ENCODE measurements at regions of chr1 and their contacts with region 1.

Region 1: GRCh38 chr1:209827384-209828262 is at the start of gene UTP25:
- DNase-seq: peak; percentile 95
- H3K4me3 ChIP-seq: peak within 1 kb of the TSS; percentile 67 to 80 (median 74)
- H3K27ac ChIP-seq: peak within 1 kb of the TSS; percentile 70 to 80 (median 74)
- H3K4me1 ChIP-seq: peaks cover 0 to 13% (median 9%) of the 10 kb centered on the region in 4 donors
- H3K27me3 ChIP-seq: no peaks in the 10 kb centered on the region
- CTCF ChIP-seq: peak; percentile 41 to 70 (median 56)
- EP300 ChIP-seq: peak in 1 of 4 donors; percentile 49
- POLR2A ChIP-seq: no peak
- total RNA-seq, gene UTP25: 5.7 to 8.6 (median 6.9) TPM

Region 2: DNA sequence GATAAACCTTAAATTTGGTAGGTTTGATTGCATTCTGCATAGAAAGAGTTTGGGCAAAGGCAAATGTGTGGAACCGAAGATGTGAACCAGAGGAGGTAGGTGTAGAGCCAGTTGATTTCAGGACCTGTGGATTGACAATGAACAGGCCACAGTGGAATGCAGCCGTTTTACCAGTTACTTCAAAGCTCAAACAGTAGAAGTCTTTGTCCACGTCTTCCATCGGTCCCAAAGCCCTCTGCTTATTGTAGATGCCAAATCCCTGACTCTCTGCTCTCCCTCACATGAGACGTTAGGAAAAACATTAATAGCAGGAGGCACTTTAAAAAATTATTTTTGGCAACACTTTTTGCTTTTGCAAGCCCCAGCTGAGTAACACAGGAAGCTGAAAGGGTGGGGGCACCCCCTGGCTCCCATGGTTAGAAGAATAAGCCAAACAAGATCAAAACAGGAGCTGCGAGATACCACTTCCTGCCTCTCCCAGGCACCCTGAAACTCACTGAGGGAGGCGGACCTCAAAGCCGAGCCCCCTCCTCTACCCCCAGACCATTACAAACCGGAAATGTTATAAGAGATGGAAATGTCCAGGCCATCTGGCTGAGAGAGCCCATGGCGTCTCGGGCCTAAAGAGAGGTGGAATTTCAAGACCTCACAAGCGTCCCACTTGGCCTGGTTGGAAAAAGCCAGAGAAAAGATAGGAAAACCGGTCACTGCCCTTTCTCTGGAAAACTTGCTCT is 58.3 kb before region 1 on chr1:
- intact Hi-C with region 1: loop called (anchors 10 kb)
- DNase-seq: peak; percentile 88
- H3K4me3 ChIP-seq: peak overlapping the region in 2 of 4 donors; percentile 10 to 13
- H3K27ac ChIP-seq: peak overlapping the region; percentile 64 to 81 (median 80)
- H3K4me1 ChIP-seq: peaks cover 0 to 37% (median 30%) of the 10 kb centered on the region in 4 donors
- H3K27me3 ChIP-seq: no peaks in the 10 kb centered on the region
- CTCF ChIP-seq: no peak
- EP300 ChIP-seq: peak; percentile 45 to 81 (median 64)
- POLR2A ChIP-seq: no peak